Transverse colon (tissue), 4 donors: ENCODE measurements at regions of chr17 and their contacts with region 1.

Region 1: GRCh38 chr17:62065598-62066468 is 755 bp upstream of the MED13 start:
- DNase-seq: peak; percentile 99
- H3K4me3 ChIP-seq: peak overlapping the region; percentile 95 to 99 (median 99)
- H3K27ac ChIP-seq: peak overlapping the region; percentile 99 to 100 (median 100)
- H3K4me1 ChIP-seq: peaks cover 3 to 32% (median 25%) of the 10 kb centered on the region in 4 donors
- H3K27me3 ChIP-seq: no peaks in the 10 kb centered on the region
- CTCF ChIP-seq: peak; percentile 84 to 96 (median 92)
- EP300 ChIP-seq: no peak
- POLR2A ChIP-seq: peak; percentile 82

Region 2: GRCh38 chr17:61196302-61196704 is 869.5 kb before region 1 on chr17:
- in situ Hi-C with region 1: no loop called
- intact Hi-C with region 1: no loop called
- DNase-seq: no peak
- H3K4me3 ChIP-seq: no peak overlapping the region
- H3K27ac ChIP-seq: peak overlapping the region in 3 of 4 donors; percentile 10 to 31 (median 21)
- H3K4me1 ChIP-seq: no peaks in the 10 kb centered on the region
- H3K27me3 ChIP-seq: no peaks in the 10 kb centered on the region
- CTCF ChIP-seq: no peak
- EP300 ChIP-seq: no peak
- POLR2A ChIP-seq: no peak

Region 3: DNA sequence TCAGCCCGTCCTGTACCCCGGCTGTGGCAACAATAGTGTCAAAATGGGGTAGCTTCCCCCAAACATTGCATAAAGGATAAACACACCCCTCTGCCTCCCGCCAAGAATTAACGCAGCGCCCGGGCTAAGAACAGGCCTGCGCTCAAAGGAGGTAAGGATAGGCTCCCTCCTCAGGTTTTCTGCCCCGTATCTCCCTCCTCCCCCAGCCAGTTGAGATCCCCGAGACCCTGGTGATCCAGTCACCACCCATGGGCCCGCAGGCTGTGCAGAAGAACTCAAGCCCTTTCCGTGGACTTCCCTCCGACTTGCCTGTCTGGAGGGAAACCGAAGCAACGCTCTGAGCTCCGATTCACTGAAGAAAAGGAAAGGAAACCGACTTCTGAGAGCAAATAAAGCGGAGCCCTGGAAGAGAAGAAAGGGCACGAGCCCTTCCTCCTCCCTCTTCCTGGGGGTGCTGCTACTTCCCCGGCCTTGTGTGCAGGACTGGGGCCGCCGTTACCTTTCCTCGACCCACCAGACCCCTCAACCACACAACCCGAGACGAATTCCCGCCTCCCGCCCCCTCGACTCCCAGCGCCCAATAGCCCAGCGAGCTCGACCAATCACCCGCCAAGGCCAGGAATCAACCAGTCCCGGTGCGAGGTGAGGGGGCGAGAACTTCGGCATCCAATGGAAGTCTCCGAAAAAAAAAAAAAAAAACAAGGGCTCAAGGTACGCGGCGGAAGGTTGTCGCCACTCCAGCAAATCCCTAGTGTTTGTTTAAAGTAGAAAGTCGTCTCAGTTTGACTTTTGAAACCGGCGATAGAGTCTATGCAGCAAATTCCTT is 202.6 kb before region 1 on chr17 and contains the start of gene BRIP1:
- in situ Hi-C with region 1: loop called in 1 of 4 experiments (anchors 10 kb)
- intact Hi-C with region 1: no loop called
- DNase-seq: peak; percentile 92
- H3K4me3 ChIP-seq: peak within 1 kb of the TSS; percentile 49 to 94 (median 81)
- H3K27ac ChIP-seq: peak within 1 kb of the TSS; percentile 73 to 95 (median 89)
- H3K4me1 ChIP-seq: peaks cover 0 to 22% (median 13%) of the 10 kb centered on the region in 4 donors
- H3K27me3 ChIP-seq: no peaks in the 10 kb centered on the region
- CTCF ChIP-seq: no peak
- EP300 ChIP-seq: no peak
- POLR2A ChIP-seq: peak; percentile 53
- total RNA-seq, gene BRIP1: 0.80 to 1.9 (median 1.2) TPM

Region 4: GRCh38 chr17:61927200-61928165 is 138.3 kb before region 1 on chr17 and contains the start of gene INTS2:
- in situ Hi-C with region 1: loop called in 1 of 4 experiments (anchors 10 kb)
- intact Hi-C with region 1: loop called (anchors 2 kb)
- DNase-seq: peak; percentile 97
- H3K4me3 ChIP-seq: peak within 1 kb of the TSS; percentile 55 to 91 (median 72)
- H3K27ac ChIP-seq: peak within 1 kb of the TSS; percentile 88 to 95 (median 90)
- H3K4me1 ChIP-seq: peaks cover 8 to 19% (median 15%) of the 10 kb centered on the region in 4 donors
- H3K27me3 ChIP-seq: no peaks in the 10 kb centered on the region
- CTCF ChIP-seq: peak in 1 of 5 experiments; percentile 24
- EP300 ChIP-seq: no peak
- POLR2A ChIP-seq: peak; percentile 70
- total RNA-seq, gene INTS2: 1.9 to 17.7 (median 7.9) TPM